Ascending aorta (tissue), 2 donors: ENCODE measurements at regions of chr2 and their contacts with region 1.

Region 1: DNA sequence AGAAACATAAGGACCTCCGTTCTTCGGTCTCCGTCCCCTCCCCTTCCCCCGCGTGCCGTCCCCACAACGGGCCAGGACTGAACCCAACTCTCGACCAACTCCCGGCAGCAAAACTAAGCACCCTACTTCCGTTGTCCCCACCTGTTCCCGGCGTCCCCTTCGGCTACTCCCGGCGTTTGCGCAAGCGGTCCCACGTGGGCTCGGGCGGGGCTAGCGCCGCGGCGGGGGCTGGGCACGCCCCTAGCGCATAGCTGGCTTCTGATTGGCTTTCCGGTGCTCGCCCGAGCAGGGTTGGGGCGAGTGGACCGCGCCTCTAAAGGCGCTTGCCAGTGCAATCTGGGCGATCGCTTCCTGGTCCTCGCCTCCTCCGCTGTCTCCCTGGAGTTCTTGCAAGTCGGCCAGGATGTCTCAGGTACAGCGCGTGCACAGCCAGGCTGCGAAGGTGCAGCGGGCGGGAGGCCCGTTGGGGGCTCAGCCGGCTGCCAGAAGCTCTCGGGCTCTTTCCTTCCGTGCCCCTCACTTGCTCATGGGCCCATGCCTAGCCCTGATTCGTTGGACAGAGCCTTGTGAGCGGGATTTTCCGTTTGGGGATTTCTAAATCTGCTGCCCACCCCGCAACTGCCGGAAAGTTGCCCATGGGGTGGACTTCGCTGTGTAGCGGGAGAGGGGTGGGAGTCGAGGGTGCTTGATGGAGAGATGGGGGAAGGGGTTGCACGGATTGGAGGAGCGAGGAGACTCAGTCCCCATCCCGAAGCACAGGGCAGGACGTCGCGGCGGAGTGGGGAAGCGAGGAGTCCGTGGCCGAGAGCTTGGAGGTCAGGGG is at the starts of genes C2orf76 and DBI:
- DNase-seq: peak; percentile 82 to 97
- H3K4me3 ChIP-seq: peak within 1 kb of the TSS; percentile 75 to 80
- H3K27ac ChIP-seq: peak within 1 kb of the TSS; percentile 80 to 84
- H3K4me1 ChIP-seq: peaks cover 5 to 18% of the 10 kb centered on the region in 2 donors
- H3K27me3 ChIP-seq: no peaks in the 10 kb centered on the region
- CTCF ChIP-seq: no peak
- total RNA-seq, gene C2orf76: not detected
- total RNA-seq, gene DBI: 11.2 TPM

Region 2: DNA sequence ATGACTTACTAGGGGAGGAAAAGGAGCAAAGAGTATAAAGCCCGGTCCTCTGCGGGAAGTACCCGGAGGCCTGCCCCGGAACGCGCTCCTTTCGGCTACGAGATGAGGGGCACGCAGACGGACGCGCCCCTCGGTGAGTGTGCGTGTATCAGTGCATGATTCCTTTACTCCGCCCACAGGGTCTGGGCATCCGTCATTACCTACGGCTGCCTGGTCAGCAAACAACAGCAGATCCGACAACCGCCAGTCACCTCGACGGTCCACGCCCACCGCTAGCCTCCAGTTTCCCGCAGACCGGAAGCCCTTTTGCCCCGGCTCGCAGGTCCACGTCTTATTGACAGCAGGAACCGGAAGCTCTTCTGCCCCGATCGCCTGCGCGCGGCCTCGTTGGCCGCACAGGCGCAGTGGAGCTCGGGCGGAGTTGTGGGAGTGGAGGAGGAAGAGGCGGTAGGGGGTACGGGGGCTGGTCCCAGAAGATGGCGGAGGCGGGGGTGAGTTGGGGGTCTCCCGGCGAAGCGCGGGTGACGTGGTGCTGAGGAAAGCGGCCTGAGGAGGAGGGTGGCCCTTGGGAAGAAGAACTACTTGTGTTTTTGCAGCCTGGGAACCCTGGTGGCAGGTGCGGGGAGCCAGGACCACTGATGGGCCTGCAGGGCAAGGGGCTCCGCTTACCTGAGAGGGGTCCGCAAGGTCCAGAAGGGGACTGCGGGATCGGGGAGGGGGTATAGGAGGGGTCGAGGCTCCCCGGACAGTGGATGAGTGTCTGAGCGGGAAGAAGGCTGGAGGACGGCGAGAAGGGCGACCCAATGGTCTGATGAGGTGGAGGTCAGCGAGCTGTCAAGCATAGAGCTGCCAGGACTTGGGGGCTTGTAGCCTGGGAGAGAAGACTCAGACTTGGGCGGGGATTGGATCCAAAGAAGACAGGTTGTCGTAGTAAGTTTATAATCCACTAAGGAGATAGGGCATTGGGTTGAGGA is 1278.5 kb before region 1 on chr2 and contains the start of gene INSIG2:
- intact Hi-C with region 1: loop called (anchors 2 kb)
- DNase-seq: peak; percentile 77 to 95
- H3K4me3 ChIP-seq: peak within 1 kb of the TSS; percentile 79 to 90
- H3K27ac ChIP-seq: peak within 1 kb of the TSS; percentile 48 to 69
- H3K4me1 ChIP-seq: peaks cover 0 to 23% of the 10 kb centered on the region in 2 donors
- H3K27me3 ChIP-seq: no peaks in the 10 kb centered on the region
- CTCF ChIP-seq: peak in 1 of 3 experiments; percentile 14
- total RNA-seq, gene INSIG2: 64.2 TPM

Region 3: GRCh38 chr2:119431976-119432850 is 65.4 kb after region 1 on chr2:
- intact Hi-C with region 1: loop called (anchors 2 kb)
- DNase-seq: no peak
- H3K4me3 ChIP-seq: peak overlapping the region; percentile 51 to 72
- H3K27ac ChIP-seq: peak overlapping the region; percentile 28 to 40
- H3K4me1 ChIP-seq: peaks cover 0 to 6% of the 10 kb centered on the region in 2 donors
- H3K27me3 ChIP-seq: no peaks in the 10 kb centered on the region
- CTCF ChIP-seq: no peak

Region 4: DNA sequence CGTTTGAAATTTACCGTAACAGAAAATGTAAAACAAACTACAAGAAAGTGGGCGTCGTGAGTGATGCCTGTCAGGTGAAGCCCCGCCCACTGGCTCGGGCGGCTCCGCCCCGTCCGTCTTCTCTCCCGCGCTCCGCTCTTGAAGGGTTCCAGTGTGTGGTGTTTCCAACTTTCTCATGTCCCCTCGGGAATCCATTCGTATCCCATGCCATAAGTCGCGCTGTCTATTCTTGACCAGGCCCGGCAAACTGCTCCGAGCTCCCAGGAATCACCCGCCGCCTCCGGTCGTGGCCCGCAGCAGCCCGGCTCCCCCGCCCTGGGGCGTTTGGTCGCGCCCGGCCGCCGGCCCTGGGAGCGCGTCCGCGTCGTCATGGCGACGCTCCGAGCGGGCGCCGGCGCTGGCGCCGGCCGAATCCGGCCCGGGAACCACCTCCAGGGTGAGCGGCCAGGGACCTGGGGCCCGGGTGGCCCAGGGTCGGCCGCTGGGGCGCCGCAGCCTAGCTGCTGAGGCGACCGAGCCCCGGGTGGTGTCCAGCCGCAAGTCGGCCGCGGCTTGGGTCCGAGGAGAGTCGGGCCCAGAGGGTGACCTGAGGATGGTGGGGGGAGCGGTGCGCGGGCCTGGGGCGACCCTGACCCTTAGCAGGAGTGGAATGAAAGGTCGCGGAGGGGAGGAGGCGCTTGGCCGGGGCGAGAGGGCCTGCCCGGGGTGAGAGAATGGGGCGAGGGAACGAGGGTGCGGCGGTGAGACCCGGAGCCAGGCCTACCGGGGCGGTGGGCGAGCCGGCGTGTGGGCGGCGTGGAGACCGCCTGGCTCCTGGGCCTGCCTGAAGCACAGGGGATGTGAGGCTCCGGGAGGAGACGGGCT is 177.4 kb after region 1 on chr2 and contains the start of gene CFAP221:
- intact Hi-C with region 1: loop called (anchors 2 kb)
- DNase-seq: peak in 1 of 2 donors; percentile 72
- H3K4me3 ChIP-seq: peak within 1 kb of the TSS; percentile 74 to 81
- H3K27ac ChIP-seq: peak within 1 kb of the TSS; percentile 17 to 62
- H3K4me1 ChIP-seq: peaks cover 0 to 4% of the 10 kb centered on the region in 2 donors
- H3K27me3 ChIP-seq: no peaks in the 10 kb centered on the region
- CTCF ChIP-seq: no peak
- total RNA-seq, gene CFAP221: not detected

Region 5: DNA sequence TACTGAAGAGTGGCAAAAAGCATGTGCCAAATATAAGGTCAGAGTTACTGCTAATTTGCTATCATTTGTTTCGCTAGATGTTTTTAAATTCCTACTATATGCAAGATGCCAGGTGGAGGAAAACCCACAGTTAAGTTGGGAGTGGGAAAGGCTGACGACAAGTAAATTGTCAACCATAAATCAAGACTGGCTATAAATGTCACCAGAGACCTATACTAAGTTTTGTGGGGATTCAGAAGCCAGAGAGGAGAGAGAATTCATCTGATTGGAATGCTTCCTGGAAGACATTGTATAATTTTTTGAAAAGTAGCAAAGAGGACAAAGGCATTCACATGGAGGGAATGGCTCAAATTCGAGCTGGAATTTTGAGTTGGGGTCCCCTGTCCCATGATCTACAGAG is 241.7 kb after region 1 on chr2:
- intact Hi-C with region 1: no loop called
- DNase-seq: no peak
- H3K4me3 ChIP-seq: no peak overlapping the region
- H3K27ac ChIP-seq: no peak overlapping the region
- H3K4me1 ChIP-seq: no peaks in the 10 kb centered on the region
- H3K27me3 ChIP-seq: no peaks in the 10 kb centered on the region
- CTCF ChIP-seq: no peak

Region 6: DNA sequence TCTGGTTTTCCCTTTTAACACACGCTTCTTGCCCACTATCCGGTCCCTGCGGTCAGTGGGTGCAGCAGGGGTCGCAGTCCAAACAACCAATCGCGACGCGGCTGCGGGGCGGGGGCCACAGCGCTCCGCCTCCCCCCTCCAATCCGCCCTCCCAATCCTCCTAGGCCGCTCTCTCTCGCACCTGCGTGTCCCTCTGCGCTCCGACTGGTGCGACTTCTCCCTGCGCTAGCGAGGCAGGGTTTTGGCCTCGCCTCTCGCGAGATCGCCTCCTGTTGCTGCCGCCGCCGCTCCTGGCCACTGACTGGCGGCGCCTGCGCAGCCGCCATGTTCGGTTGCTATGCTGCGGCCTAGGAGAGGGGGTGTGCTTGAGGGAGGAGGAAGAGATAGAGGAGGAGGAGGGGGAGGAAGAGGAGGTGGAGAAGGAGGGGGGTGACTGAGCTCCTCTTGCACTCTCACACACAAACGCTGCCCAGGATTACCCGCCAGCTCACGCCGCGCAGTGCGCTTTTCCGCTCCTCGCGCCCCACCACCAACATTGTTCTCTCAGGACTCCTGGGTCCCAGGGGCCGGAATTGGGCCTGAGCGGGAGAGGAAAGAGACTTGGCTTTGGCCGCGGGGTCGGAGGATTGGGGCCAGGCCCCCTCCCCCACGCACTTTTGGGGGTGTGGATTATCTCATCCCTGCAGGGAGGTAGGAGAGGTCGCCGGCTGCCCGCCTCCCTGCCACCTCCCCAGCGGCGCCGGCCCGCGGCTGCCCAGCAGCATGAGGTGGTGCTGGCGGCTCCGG is 392.8 kb after region 1 on chr2 and contains the start of gene PTPN4:
- intact Hi-C with region 1: loop called (anchors 2 kb)
- DNase-seq: peak; percentile 90 to 98
- H3K4me3 ChIP-seq: peak within 1 kb of the TSS; percentile 75 to 92
- H3K27ac ChIP-seq: peak within 1 kb of the TSS; percentile 84 to 90
- H3K4me1 ChIP-seq: peaks cover 0 to 14% of the 10 kb centered on the region in 2 donors
- H3K27me3 ChIP-seq: no peaks in the 10 kb centered on the region
- CTCF ChIP-seq: no peak
- total RNA-seq, gene PTPN4: 35.9 TPM

Region 7: DNA sequence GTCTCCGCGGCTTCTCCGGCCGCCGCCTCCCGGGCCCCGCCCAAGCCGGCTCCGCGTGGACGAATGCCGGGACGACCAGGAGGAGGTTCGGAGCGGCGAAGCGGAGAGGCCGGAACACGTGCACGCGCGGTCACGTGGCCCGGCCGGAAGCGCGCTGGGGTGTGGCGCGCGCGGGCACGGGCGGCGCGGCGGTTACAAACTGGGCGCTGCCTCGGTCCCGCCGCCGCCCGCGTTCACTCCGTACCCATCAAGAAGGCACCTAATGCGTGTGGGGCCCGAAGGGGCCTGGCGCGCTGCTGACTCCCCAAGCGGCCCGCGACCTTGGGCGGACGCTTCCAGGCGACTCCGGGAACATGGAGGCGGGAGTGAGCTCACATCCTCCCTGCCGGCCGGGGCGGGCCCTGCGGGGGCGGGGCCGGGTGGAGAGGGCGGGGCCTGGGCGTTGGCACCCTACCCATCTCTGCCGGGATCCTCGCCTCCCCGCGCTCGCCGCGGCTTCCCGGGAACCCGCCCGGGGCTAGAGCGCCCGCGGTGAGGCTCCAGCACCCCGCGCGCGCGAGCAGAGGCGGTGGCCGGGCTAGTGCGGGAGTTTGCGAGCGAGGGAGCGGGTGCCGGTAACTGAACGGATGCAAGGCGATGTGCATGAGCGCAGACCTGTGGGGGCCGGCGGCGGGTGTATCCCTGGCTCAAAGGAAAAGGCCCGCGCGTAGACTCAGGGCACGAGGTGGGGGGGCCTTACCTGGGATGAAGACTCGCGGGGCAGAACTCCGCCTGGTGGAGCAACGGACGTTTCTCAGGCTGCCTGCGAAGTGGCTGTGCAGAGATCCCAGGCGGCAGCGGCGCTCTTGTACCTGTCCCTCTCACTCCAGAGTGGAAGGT is 856.4 kb after region 1 on chr2 and contains the start of gene TMEM185B:
- intact Hi-C with region 1: loop called (anchors 10 kb)
- DNase-seq: peak; percentile 63 to 94
- H3K4me3 ChIP-seq: peak within 1 kb of the TSS; percentile 65 to 76
- H3K27ac ChIP-seq: peak within 1 kb of the TSS; percentile 82 to 89
- H3K4me1 ChIP-seq: peaks cover 0 to 10% of the 10 kb centered on the region in 2 donors
- H3K27me3 ChIP-seq: no peaks in the 10 kb centered on the region
- CTCF ChIP-seq: peak in 2 of 3 experiments; percentile 19 to 20
- total RNA-seq, gene TMEM185B: 31.8 TPM

Region 8: GRCh38 chr2:120470041-120470965 is 1103.4 kb after region 1 on chr2:
- intact Hi-C with region 1: loop called (anchors 10 kb)
- DNase-seq: peak; percentile 66 to 96
- H3K4me3 ChIP-seq: no peak overlapping the region
- H3K27ac ChIP-seq: peak overlapping the region; percentile 85 to 91
- H3K4me1 ChIP-seq: peaks cover 20 to 38% of the 10 kb centered on the region in 2 donors
- H3K27me3 ChIP-seq: no peaks in the 10 kb centered on the region
- CTCF ChIP-seq: no peak